ENCODE measurements at regions of chr2 and their contacts with region 1.

Region 1: GRCh38 chr2:134118279-134119116 is 135.4 kb upstream of the MGAT5 start:
- DNase-seq: peak; percentile 79
- H3K4me3 ChIP-seq: no peak overlapping the region; a peak in 1 of 4 replicates
- H3K27ac ChIP-seq: peak overlapping the region in 1 of 2 experiments; percentile 62; a peak in 2 of 4 replicates
- H3K4me1 ChIP-seq: peaks cover 0 to 28% of the 10 kb centered on the region in 2 experiments; a peak in 2 of 4 replicates
- H3K27me3 ChIP-seq: no peaks in the 10 kb centered on the region
- CTCF ChIP-seq: peak; percentile 89
- EP300 ChIP-seq: no peak
- RAD21 ChIP-seq: peak; percentile 97

Region 2: DNA sequence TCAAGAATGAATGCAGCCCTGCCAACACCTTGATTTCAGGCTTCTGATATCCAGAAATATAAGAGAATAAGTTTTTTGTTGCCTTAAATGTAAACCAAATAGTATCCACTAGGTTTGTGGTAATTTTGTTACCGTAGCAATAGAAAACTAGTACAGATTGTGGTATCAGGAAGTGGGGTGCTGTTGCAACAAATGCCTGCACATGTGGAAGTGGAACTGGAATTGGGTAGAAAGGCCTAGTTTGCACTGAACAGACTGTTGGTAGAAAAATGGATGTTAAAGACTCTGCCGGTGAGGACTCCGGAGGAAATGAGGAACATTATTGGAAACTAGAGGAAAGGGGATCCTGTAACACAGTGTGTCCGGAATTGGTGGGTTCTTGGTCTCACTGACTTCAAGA is 10.4 kb before region 1 on chr2:
- CTCF ChIA-PET with region 1: interaction called, 13 read pairs
- POLR2A ChIA-PET with region 1: no interaction called
- DNase-seq: no peak
- H3K4me3 ChIP-seq: no peak overlapping the region
- H3K27ac ChIP-seq: no peak overlapping the region
- H3K4me1 ChIP-seq: no peaks in the 10 kb centered on the region
- H3K27me3 ChIP-seq: no peaks in the 10 kb centered on the region
- CTCF ChIP-seq: no peak
- EP300 ChIP-seq: no peak
- RAD21 ChIP-seq: no peak

Region 3: GRCh38 chr2:134161170-134161547 is 42.7 kb after region 1 on chr2:
- CTCF ChIA-PET with region 1: interaction called, 5 read pairs
- POLR2A ChIA-PET with region 1: interaction called, 10 read pairs
- DNase-seq: peak; percentile 50
- H3K4me3 ChIP-seq: no peak overlapping the region
- H3K27ac ChIP-seq: peak overlapping the region in 1 of 2 experiments; percentile 84; a peak in 2 of 4 replicates
- H3K4me1 ChIP-seq: peaks cover 7 to 35% of the 10 kb centered on the region in 2 experiments; a peak in 3 of 4 replicates
- H3K27me3 ChIP-seq: no peaks in the 10 kb centered on the region
- CTCF ChIP-seq: no peak
- EP300 ChIP-seq: no peak
- RAD21 ChIP-seq: no peak

Region 4: DNA sequence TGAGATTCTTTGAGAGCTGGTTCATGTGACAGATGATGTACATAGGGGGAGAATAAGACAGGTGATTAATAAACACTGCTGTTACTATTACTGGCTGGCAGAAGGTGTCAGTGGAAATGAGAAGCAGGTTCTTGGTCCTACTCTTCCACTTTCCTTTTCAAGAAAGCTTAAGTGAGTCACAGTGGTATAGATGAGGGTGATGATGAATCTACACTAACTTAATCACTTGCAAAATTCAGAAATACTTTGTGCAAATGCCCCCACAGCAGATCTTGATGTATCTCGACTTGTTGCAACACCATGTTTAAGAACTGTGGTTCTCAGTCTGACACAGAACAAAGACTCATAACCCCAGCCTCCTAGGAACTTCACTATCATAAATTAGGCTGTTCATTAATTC is 99.4 kb after region 1 on chr2:
- CTCF ChIA-PET with region 1: interaction called, 10 read pairs
- POLR2A ChIA-PET with region 1: no interaction called
- DNase-seq: no peak
- H3K4me3 ChIP-seq: no peak overlapping the region
- H3K27ac ChIP-seq: no peak overlapping the region
- H3K4me1 ChIP-seq: peaks cover 0 to 19% of the 10 kb centered on the region in 2 experiments; a peak in 1 of 4 replicates
- H3K27me3 ChIP-seq: no peaks in the 10 kb centered on the region
- CTCF ChIP-seq: no peak
- EP300 ChIP-seq: no peak
- RAD21 ChIP-seq: no peak

Region 5: GRCh38 chr2:134253804-134254203 is 135.3 kb after region 1 on chr2 and contains the start of gene MGAT5:
- CTCF ChIA-PET with region 1: interaction called, 27 read pairs
- POLR2A ChIA-PET with region 1: no interaction called
- DNase-seq: no peak
- H3K4me3 ChIP-seq: no peak within 1 kb of the TSS
- H3K27ac ChIP-seq: peak within 1 kb of the TSS in 1 of 2 experiments; percentile 39; a peak in 1 of 4 replicates
- H3K4me1 ChIP-seq: peaks cover 0 to 23% of the 10 kb centered on the region in 2 experiments; a peak in 1 of 4 replicates
- H3K27me3 ChIP-seq: no peaks in the 10 kb centered on the region
- CTCF ChIP-seq: no peak
- EP300 ChIP-seq: no peak
- RAD21 ChIP-seq: no peak
- polyA plus RNA-seq, gene MGAT5: 18.2 and 20.6 TPM in 2 replicates

Region 6: GRCh38 chr2:134375935-134376334 is 257.4 kb after region 1 on chr2:
- CTCF ChIA-PET with region 1: interaction called, 19 read pairs
- POLR2A ChIA-PET with region 1: no interaction called
- DNase-seq: peak; percentile 23
- H3K4me3 ChIP-seq: no peak overlapping the region
- H3K27ac ChIP-seq: peak overlapping the region in 1 of 2 experiments; percentile 34; a peak in 1 of 4 replicates
- H3K4me1 ChIP-seq: peaks cover 0 to 25% of the 10 kb centered on the region in 2 experiments; a peak in 1 of 4 replicates
- H3K27me3 ChIP-seq: no peaks in the 10 kb centered on the region
- CTCF ChIP-seq: peak; percentile 34; the same call in 1 of the 2 replicates
- EP300 ChIP-seq: no peak
- RAD21 ChIP-seq: peak; percentile 75

Measured in SK-N-SH (cell line).